ENCODE measurements at regions of chr4 and their contacts with region 1.

Region 1: DNA sequence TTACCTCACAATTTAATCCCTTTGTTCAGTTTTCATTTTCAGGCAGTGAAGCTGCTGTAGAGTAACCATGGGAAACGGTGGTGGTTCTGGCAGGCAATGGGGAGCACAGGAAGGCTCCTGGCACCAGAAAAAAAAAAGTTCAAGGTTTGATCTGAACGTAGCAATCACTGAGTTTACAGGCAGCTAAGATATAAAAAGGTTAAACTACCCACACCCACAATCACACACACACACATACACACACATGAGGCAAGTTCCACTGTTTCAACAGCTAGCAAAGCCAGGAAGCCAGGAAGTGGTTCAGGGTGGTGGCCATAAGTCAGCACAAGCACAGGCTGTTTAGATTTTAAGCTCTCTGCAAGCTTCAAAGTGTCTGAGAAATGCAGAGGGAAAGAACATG is at the start of gene SULT1B1:
- DNase-seq: peak in 1 of 5 donors; percentile 18
- ATAC-seq: peak in 3 of 4 donors; percentile 60 to 86 (median 72)
- H3K4me3 ChIP-seq: peak within 1 kb of the TSS in 1 of 12 donors; percentile 39
- H3K27ac ChIP-seq: peak within 1 kb of the TSS in 1 of 12 donors; percentile 69
- H3K4me1 ChIP-seq: peaks cover 0 to 26% (median 0%) of the 10 kb centered on the region in 12 donors
- H3K27me3 ChIP-seq: no peaks in the 10 kb centered on the region
- CTCF ChIP-seq: no peak
- POLR2A ChIP-seq: no peak
- total RNA-seq, gene SULT1B1: 0.17 to 1.1 (median 0.72) TPM

Region 2: DNA sequence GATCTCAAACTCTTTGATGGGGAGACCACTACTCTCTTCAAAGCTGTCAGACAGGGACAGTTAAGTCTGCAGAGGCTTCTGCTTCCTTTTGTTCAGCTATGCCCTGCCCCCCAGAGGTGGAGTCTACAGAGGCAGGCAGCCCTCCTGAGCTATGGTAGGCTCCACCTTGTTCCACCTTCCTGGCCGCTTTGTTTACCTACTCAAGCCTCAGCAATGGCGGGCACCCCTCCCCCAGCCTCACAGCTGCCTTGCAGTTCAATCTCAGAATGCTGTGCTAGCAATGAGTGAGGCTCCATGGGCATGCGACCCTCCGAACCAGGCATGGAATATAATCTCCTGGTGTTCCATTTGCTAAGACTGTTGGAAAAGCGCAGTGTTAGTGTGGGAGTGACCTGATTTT is 986.8 kb before region 1 on chr4:
- intact Hi-C with region 1: no loop called
- DNase-seq: no peak
- ATAC-seq: no peak
- H3K4me3 ChIP-seq: no peak overlapping the region
- H3K27ac ChIP-seq: no peak overlapping the region
- H3K4me1 ChIP-seq: no peaks in the 10 kb centered on the region
- H3K27me3 ChIP-seq: no peaks in the 10 kb centered on the region
- CTCF ChIP-seq: no peak
- POLR2A ChIP-seq: no peak

Region 3: DNA sequence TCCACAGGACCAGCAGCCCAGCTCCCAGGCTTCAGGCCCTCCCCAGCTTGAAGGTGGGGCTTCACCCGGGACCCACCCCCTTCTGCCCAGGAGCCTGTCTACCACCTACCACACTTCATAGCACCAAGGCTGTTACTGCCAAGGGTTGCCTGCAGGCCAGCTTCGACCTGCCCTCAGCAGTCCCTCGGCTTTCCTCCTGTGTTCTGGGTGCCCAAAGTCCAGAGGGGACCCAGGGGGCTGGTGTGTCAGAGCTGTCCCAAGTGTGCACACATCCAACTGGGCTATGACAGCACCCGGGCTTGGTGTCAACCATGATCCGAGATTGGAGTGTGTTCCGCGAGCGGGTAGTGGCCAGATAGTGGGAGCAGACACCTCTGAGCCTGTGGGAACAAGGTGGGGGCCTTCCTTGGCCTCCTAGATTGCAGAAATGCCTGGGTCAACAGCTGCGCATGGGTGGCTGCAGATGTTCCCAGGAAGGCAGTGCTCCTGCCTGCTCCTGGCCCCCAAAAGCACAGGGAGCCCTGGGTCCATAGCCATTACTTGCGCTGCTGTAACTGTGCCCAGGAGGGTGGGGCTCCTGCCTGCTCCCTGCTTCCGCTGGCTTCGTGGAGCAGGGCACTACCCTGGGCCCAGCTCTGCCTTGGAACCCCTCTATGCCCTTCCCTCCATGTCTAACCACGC is 16.8 kb before region 1 on chr4:
- intact Hi-C with region 1: loop called in 1 of 10 experiments (anchors 1 kb)
- DNase-seq: no peak
- ATAC-seq: peak in 1 of 4 donors; percentile 18
- H3K4me3 ChIP-seq: no peak overlapping the region
- H3K27ac ChIP-seq: no peak overlapping the region
- H3K4me1 ChIP-seq: no peaks in the 10 kb centered on the region
- H3K27me3 ChIP-seq: no peaks in the 10 kb centered on the region
- CTCF ChIP-seq: no peak
- POLR2A ChIP-seq: no peak

Region 4: DNA sequence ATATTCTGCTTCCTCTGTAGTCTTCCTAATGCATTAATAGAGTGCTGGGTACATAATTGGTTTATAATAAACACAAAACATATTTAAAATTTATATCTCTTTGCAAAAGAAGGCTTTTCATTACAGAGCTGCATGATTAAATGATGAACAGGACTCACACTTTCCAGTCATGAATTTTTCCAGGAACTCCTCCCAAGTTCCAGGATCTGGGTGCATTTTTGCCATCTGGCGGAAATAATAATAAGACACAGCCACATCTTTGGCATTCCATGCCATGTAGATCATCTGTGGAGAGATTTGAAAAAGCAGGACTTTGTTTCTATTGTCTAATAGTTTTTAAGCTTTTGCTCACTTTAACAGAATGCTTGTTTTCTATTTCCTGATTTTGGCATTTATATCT is 40.1 kb after region 1 on chr4:
- intact Hi-C with region 1: no loop called
- DNase-seq: no peak
- ATAC-seq: no peak
- H3K4me3 ChIP-seq: no peak overlapping the region
- H3K27ac ChIP-seq: no peak overlapping the region
- H3K4me1 ChIP-seq: no peaks in the 10 kb centered on the region
- H3K27me3 ChIP-seq: no peaks in the 10 kb centered on the region
- CTCF ChIP-seq: no peak
- POLR2A ChIP-seq: no peak